ENCODE measurements at regions of chr6 and their contacts with region 1.

Region 1: DNA sequence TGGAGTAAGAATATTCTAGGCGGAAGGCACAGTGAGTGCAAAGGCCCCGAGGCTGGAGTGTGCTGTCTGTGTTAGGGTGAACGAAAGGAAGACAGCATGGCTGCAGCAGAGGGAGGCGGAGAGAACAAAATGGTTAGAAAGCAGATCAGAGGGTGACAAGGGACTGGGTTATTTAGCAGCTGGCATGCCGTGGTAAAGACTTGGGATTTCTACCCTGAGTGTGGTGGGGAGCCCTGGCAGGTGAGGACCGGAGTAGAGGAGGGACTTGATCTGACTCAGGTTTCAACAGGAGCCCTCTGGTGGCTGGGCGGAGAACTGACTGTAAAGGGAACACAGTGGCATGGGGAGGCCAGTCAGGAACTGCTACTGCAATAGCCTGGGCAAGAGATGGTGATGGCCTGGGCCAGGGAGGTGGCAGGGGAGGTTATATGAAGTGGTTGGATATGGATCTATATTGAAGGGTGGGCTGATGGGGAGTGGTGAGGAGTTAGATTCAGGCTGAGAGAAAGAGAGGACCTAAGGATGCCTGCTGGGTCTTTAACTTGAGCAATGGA is 38.0 kb downstream of the PIM1 start:
- DNase-seq: peak; percentile 87 to 97
- H3K4me3 ChIP-seq: no peak overlapping the region
- H3K27ac ChIP-seq: no peak overlapping the region
- H3K4me1 ChIP-seq: no peaks in the 10 kb centered on the region; a peak in 1 of 7 replicates
- H3K27me3 ChIP-seq: no peaks in the 10 kb centered on the region
- CTCF ChIP-seq: peak; percentile 87 to 94 (median 94)
- EP300 ChIP-seq: no peak
- POLR2A ChIP-seq: no peak
- RAD21 ChIP-seq: peak; percentile 84

Region 2: GRCh38 chr6:36977470-36977941 is 230.5 kb before region 1 on chr6:
- CTCF ChIA-PET with region 1: interaction called, 12 read pairs
- POLR2A ChIA-PET with region 1: no interaction called
- DNase-seq: no peak
- H3K4me3 ChIP-seq: no peak overlapping the region
- H3K27ac ChIP-seq: no peak overlapping the region
- H3K4me1 ChIP-seq: peaks cover 6 to 14% (median 8%) of the 10 kb centered on the region in 4 experiments
- H3K27me3 ChIP-seq: no peaks in the 10 kb centered on the region
- CTCF ChIP-seq: peak; percentile 46 to 70 (median 47)
- EP300 ChIP-seq: no peak
- POLR2A ChIP-seq: no peak
- RAD21 ChIP-seq: peak; percentile 43 to 58

Region 3: DNA sequence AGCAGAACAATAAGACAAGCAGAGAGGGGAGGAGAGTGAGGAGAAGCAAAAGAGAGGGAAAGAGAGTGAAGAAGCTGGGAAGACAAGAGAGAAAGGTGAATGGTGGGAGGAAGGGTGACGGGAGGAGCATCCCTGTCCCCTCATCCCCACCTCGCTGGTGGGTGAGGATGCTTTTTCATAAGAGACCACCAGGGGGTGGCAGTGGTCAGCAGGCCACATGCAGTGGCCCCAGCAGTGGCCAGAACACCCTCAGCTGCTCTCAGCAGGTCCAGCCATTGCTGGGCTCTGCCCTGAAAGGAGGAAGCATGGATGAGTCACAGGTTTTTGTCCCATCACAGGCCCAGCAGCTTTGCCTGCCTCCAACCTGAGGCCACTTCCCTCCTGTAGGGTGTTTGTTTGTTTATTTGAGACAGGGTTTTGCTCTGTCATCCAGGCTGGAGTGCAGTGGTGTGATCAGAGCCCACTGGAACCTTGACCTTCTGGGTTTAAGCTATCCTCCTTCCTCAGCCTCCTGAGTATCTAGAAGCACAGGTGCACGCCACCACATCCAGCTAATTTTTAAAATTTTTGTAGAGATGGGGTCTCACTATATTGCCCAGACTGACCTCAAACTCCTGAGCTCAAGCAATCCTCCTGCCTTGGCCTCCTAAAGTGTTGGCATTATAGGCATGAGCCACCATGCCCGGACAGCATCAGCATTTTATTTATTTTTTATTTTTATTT is 178.6 kb before region 1 on chr6:
- CTCF ChIA-PET with region 1: interaction called, 866 read pairs
- POLR2A ChIA-PET with region 1: interaction called, 4 read pairs
- DNase-seq: peak in 1 of 2 experiments; percentile 82
- H3K4me3 ChIP-seq: no peak overlapping the region
- H3K27ac ChIP-seq: no peak overlapping the region; the same call in 1 of the 2 replicates
- H3K4me1 ChIP-seq: no peaks in the 10 kb centered on the region
- H3K27me3 ChIP-seq: no peaks in the 10 kb centered on the region
- CTCF ChIP-seq: peak; percentile 76 to 88 (median 80)
- EP300 ChIP-seq: no peak
- POLR2A ChIP-seq: no peak
- RAD21 ChIP-seq: peak; percentile 82 to 84

Region 4: GRCh38 chr6:37051138-37052026 is 156.6 kb before region 1 on chr6:
- CTCF ChIA-PET with region 1: interaction called, 363 read pairs
- POLR2A ChIA-PET with region 1: interaction called, 6 read pairs
- DNase-seq: peak; percentile 47 to 98
- H3K4me3 ChIP-seq: no peak overlapping the region
- H3K27ac ChIP-seq: no peak overlapping the region
- H3K4me1 ChIP-seq: peaks cover 0 to 22% (median 17%) of the 10 kb centered on the region in 4 experiments; a peak in 6 of 7 replicates
- H3K27me3 ChIP-seq: no peaks in the 10 kb centered on the region
- CTCF ChIP-seq: peak in 2 of 3 experiments; percentile 97; a peak in 3 of 4 replicates
- EP300 ChIP-seq: 0 out of 3 replicates have a peak, but pooled peaks of 1 of the 2 experiments have one; percentile 24
- POLR2A ChIP-seq: no peak
- RAD21 ChIP-seq: peak; percentile 97 to 98

Region 5: DNA sequence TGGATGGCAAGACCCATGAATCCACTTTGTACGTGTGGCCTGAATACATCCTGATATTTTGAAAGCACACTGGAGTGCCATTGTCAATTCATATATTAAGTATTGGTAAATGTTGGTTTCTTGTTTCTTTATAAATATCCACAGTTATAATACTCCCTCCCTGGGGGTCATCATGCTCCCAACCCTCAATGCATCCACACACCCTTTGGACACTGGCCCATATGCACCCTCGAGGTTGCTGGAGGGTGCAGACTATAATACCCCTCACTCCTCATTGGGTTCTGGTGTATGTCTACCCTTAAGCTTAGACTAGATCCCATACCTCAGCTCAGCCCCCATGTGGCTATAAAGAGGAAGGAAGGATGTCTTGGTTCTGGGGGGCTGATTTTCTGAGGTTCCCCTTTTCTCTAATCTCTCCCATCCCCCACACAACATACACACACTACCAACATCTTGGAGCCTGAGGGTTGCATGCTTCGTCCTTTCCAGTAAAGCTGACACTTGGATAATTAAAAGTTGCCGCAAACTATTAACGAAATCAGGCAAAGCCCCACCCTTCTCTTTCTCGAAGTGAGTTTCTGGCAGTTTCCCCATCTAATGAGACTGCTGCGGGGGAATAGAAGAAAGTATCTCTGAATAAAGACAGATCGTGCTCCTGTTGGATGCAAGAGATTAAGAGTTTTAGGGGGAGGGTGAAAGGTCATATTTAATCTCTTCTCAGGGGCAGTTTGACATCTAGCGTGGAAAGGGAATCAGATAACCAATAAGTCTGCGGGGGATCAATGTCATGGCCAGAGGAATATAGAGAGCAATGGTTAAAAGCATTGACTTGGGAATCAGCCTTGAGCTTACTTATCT is 30.7 kb before region 1 on chr6:
- CTCF ChIA-PET with region 1: interaction called, 26 read pairs
- POLR2A ChIA-PET with region 1: interaction called, 9 read pairs
- DNase-seq: no peak
- H3K4me3 ChIP-seq: no peak overlapping the region
- H3K27ac ChIP-seq: no peak overlapping the region
- H3K4me1 ChIP-seq: peaks cover 5 to 8% (median 6%) of the 10 kb centered on the region in 4 experiments; a peak in 5 of 7 replicates
- H3K27me3 ChIP-seq: no peaks in the 10 kb centered on the region
- CTCF ChIP-seq: no peak
- EP300 ChIP-seq: no peak
- POLR2A ChIP-seq: no peak
- RAD21 ChIP-seq: no peak

Region 6: DNA sequence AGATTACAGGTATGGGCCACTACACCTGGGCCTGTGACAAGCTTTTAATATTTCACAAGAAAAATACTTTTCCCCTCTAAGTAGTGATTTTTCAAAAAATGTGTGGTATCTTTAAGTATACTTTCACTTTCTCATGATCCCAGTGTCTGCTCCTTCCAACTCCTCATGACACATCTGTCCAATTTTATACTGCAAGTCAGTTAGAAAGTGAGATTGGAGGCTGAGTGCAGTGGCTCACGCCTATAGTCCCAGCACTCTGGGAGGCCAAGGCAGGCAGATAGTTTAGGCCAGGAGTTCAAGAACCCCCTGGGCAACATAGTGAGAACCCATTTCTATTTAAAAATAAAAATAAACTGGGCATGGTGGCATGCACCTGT is 17.8 kb before region 1 on chr6:
- CTCF ChIA-PET with region 1: interaction called, 34 read pairs
- POLR2A ChIA-PET with region 1: no interaction called
- DNase-seq: no peak
- H3K4me3 ChIP-seq: no peak overlapping the region
- H3K27ac ChIP-seq: no peak overlapping the region
- H3K4me1 ChIP-seq: no peaks in the 10 kb centered on the region; a peak in 2 of 7 replicates
- H3K27me3 ChIP-seq: no peaks in the 10 kb centered on the region
- CTCF ChIP-seq: no peak
- EP300 ChIP-seq: no peak
- POLR2A ChIP-seq: no peak
- RAD21 ChIP-seq: no peak

Measured in H1 (cell line).